ENCODE measurements at regions of chr20 and their contacts with region 1.

Region 1: GRCh38 chr20:59042796-59043660 is 442 bp upstream of the PRELID3B start:
- DNase-seq: peak; percentile 94
- H3K4me3 Mint-ChIP-seq: peak overlapping the region; percentile 93
- H3K27ac Mint-ChIP-seq: peak overlapping the region; percentile 94
- H3K4me1 Mint-ChIP-seq: peaks cover 44% of the 10 kb centered on the region
- H3K27me3 Mint-ChIP-seq: no peaks in the 10 kb centered on the region

Region 2: DNA sequence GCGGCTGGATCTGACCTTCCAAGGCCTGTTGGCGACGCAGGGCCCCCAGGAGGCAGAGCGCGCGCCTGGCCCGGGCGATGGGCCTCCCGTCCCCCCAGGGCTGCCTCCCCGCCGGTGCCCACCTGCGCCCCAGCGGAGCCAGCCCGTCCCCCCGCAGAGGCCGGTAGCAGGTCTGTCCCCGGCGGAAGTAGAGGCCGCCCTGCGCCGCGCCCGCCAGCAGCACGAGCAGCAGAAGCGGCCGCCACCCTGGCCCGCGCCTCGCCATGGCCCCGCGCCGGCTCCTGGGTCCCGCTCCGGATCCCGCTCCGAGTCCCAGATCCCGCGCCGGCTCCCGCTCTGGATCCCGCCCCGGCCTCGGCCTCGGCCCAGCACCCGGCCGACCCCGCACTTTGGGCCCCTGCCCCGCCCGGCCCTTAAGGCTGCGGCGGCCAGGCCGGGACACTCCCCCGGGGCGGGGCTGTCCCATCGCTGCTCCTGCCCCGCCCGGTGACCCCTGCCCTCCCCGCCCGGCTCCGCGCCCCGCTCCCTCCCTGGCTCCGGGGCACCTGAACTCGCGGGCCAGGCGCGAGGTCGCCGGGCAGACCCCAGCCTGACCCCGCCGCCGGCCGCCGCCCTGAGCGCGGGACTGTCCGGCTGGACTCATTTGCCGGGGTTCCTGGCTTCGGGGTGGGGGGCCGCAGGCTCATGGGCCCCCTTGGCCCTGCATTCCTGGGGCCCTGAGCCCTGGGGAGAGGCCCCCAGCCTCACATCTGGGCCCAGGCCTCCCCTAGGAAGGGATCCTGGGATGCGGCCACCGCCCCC is 36.0 kb before region 1 on chr20 and contains the start of gene CTSZ:
- intact Hi-C with region 1: loop called (anchors 1 kb)
- DNase-seq: peak; percentile 33
- H3K4me3 Mint-ChIP-seq: peak within 1 kb of the TSS; percentile 85
- H3K27ac Mint-ChIP-seq: peak within 1 kb of the TSS; percentile 83
- H3K4me1 Mint-ChIP-seq: peaks cover 47% of the 10 kb centered on the region
- H3K27me3 Mint-ChIP-seq: no peaks in the 10 kb centered on the region
- total RNA-seq, gene CTSZ: 46.4 and 54.1 TPM in 2 replicates

Region 3: DNA sequence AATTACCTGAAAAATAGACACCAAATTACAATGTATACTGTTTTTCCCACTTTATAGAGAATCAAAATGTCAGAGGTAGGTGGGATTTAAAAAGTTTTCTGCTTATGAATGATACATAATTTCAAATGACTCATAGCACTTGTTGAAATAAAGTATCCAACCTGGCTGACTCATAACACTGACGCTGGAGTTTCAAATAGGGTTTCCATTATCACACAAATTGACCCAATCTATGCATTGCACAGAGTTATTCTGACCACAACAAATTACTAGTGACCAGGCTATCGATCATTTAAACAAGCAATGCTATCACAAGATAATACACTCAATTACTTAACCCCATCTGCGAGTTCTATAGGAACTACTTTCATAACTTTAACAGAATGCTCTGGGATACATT is 31.4 kb after region 1 on chr20:
- intact Hi-C with region 1: loop called (anchors 2 kb)
- DNase-seq: no peak
- H3K4me3 Mint-ChIP-seq: no peak overlapping the region
- H3K27ac Mint-ChIP-seq: no peak overlapping the region
- H3K4me1 Mint-ChIP-seq: peaks cover 37% of the 10 kb centered on the region
- H3K27me3 Mint-ChIP-seq: peaks cover 31% of the 10 kb centered on the region

Measured in activated T-helper 1 cell treated with anti-CD3 and anti-CD28 coated beads, Interleukin-12 subunit alpha, Interleukin-12 subunit beta, Interleukin-2, Interleukin-4 antibody, amounts not matched to agents 30 ng/mL and 10 ng/mL and 1 ng/mL, durations not matched to agents 14 hours and 24 hours and 36 hours (primary cell).